ENCODE measurements at regions of chr17 and their contacts with region 1.

Region 1: GRCh38 chr17:59186850-59187249 is 23.0 kb upstream of the SMG8 start:
- DNase-seq: no peak
- ATAC-seq: no peak
- H3K4me3 ChIP-seq: no peak overlapping the region
- H3K27ac ChIP-seq: no peak overlapping the region
- H3K4me1 ChIP-seq: no peaks in the 10 kb centered on the region
- CTCF ChIP-seq: no peak
- EP300 ChIP-seq: no peak
- POLR2A ChIP-seq: no peak
- RAD21 ChIP-seq: no peak

Region 2: GRCh38 chr17:59199398-59199797 is 12.5 kb after region 1 on chr17:
- CTCF ChIA-PET with region 1: interaction called, 13 read pairs
- POLR2A ChIA-PET with region 1: no interaction called
- DNase-seq: no peak
- ATAC-seq: no peak
- H3K4me3 ChIP-seq: no peak overlapping the region
- H3K27ac ChIP-seq: no peak overlapping the region
- H3K4me1 ChIP-seq: no peaks in the 10 kb centered on the region
- CTCF ChIP-seq: no peak
- EP300 ChIP-seq: no peak
- POLR2A ChIP-seq: no peak
- RAD21 ChIP-seq: no peak

Region 3: DNA sequence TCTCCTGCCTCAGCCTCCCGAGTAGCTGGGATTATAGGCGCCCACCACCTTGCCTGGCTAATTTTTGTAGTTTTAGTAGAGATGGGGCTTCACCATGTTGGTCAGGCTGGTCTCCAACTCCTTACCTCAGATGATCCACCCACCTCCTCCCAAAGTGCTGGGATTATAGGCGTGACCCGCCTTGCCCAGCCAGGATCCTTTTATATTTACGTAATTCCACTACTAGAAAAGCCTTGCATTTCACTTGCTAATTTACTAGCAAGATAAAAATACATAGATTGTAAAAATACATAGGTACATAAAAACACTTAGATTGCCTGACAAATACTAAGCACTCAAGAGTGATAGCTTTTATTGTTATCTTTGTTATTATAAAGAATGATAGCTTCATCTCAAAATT is 80.9 kb after region 1 on chr17:
- CTCF ChIA-PET with region 1: no interaction called
- POLR2A ChIA-PET with region 1: no interaction called
- DNase-seq: no peak
- ATAC-seq: no peak
- H3K4me3 ChIP-seq: no peak overlapping the region
- H3K27ac ChIP-seq: no peak overlapping the region
- H3K4me1 ChIP-seq: no peaks in the 10 kb centered on the region
- CTCF ChIP-seq: no peak
- EP300 ChIP-seq: no peak
- POLR2A ChIP-seq: no peak
- RAD21 ChIP-seq: no peak